Posterior vena cava (tissue), 2 donors: ENCODE measurements at regions of chr10 and their contacts with region 1.

Region 1: DNA sequence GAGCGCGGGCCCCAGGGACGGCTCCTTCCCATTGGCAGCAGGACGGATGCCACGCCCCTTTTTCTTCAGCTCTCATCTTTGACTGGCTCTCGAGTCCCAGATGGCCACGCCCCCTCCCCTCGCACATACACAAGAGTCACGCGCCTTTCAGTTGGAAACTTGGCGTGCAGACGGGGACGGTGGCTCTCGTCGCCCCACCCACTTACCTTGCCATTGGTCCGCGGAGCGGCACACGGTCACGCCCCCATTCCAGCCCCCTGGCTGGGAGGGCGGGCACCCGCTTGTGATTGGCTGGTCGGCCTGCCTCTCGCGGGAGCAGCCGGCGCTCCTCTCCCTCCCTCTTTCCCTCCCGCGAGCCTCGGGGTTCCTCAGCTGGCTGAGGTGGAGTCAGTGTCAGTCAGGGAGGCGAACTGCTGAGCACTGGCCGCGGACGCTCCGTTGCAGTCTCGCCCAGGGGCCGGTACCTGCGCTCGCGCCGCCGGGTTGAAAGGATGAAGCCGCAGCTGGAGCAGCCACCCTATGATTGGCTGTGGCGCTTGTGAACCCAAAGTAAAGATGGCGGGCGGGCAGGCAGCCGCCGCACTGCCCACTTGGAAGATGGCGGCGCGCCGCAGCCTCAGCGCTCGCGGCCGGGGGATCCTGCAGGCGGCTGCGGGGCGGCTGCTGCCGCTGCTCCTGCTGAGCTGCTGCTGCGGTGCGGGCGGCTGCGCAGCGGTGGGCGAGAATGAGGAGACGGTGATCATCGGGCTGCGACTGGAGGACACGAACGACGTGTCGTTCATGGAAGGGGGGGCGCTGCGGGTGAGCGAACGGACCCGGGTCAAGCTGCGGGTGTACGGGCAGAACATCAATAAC is at the start of gene CNNM2:
- DNase-seq: peak; percentile 100
- total RNA-seq, gene CNNM2: 7.3 to 10.1 TPM

Region 2: DNA sequence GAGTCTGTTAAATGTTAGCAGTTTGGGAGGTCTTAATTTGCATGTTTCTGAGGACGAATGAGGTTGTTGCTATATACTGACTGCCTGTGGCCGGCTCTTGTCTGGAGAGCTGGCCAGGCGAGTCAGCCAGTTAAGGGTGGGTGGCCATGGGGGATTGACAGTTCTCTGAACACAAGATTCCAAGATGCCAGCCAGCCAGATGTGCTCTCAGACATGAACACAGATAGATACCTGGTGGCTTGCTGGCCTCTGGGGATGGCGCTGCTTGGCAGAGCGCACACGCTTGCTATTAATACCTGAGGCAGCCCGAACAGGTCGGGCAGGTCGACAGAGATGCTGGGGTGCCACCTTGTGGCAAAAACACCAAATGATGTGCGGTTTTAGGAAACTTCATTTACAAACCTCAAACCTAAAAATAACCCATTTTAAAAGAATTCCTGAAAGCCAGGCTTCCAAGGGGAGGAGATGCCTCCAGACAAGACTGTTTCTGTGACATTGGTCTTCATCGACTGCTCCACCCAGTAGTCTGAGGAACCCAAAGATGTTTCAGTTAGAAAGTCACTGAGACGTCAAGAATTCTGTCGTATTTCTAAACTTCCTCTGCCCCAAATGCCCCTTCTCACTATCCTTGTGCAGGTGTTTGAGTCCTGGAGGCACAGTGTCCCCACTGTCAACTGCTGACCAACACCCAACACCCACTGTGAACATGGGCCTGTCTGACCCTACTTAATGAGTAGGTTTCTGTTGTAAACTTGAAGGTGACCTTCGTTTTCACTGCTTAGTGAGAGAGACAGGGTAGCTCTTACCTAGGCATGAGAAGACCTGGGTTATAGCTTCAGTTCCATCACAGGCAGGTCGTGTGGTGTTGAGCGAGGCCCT is 151.5 kb after region 1 on chr10:
- intact Hi-C with region 1: loop called (anchors 2 to 5 kb)
- DNase-seq: no peak

Region 3: GRCh38 chr10:103244663-103245271 is 326.6 kb after region 1 on chr10:
- intact Hi-C with region 1: loop called in 1 of 2 experiments (anchors 10 kb)
- DNase-seq: no peak

Region 4: GRCh38 chr10:103254538-103255325 is 336.5 kb after region 1 on chr10:
- intact Hi-C with region 1: loop called (anchors 5 to 10 kb)
- DNase-seq: no peak